Gastrocnemius medialis (tissue), 4 donors: ENCODE measurements at regions of chr6 and their contacts with region 1.

Region 1: DNA sequence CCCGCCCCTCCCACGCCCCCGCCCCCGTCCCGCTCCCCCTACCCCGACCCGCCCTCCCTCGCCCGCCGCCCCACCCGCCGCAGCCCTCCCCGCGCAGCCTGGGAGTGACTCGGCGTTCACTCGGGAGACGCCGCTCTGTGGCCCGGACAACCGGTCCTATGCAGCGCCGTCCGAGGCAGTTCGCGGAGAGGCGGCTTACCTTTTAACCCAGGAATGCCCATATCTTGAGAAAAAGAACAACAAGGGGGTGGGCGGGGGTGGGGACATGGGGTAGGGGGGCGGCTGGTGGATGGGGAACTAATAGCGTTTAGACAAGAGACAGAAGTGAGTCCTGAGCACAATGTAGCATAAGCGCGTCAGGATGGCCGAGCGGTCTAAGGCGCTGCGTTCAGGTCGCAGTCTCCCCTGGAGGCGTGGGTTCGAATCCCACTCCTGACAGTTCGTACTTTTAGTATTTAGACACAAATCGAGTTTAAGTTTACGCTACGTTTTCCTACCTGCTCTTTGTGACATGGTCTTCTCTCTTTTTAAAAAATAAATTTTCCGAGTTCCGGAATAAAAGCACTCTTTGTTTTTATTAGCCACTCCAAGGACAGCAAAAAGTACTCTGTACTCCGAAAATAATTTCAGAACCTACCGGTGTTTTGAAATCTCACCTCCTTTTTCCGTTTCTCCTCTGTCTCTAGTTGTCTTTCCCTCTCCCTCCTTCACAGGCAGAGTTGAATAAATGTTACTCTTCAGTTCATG is 17.1 kb upstream of the HMGN4 start:
- DNase-seq: peak; percentile 75 to 84
- ATAC-seq: peak; percentile 83 to 86
- H3K4me3 ChIP-seq: peak overlapping the region; percentile 66 to 84 (median 76)
- H3K27ac ChIP-seq: peak overlapping the region; percentile 90 to 98 (median 98)
- H3K4me1 ChIP-seq: peaks cover 16 to 29% of the 10 kb centered on the region in 2 donors
- H3K27me3 ChIP-seq: no peaks in the 10 kb centered on the region
- CTCF ChIP-seq: no peak
- POLR2A ChIP-seq: peak in 1 of 2 donors; percentile 3

Region 2: DNA sequence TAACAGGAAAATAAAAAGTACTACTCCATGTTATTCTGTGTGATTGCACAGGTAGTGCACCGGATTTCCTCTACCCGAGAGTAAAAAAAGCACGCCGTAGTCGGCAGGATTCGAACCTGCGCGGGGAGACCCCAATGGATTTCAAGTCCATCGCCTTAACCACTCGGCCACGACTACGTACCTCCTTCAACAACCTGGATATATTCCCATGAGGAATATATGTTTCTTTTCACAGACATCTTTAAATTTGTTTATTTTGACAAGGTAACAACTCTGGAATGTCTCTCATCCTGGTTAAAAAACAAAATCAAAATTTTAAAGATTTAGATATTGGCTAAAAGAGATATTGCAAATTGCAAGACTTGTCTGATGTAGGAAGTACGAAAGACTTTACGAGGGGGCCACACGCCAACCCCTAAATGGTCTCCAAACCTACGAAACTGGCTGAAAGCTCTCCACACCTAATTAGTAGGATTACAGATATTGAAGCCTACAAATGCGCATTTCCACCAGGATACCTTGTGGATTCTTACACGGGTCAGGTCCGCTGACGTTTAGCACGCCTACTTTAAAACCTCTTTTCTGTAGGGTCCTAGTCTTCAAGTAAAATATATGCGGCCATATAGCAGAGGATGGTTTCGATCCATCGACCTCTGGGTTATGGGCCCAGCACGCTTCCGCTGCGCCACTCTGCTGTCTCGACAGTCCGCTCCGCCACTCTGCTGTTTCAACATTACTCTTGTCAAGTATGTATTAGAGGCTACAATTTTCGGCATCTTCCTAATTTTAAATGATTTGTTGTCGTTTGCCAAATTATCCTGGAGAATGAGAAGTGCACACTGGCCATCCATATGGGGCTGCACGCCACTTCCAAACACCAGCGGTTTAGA is 208.3 kb before region 1 on chr6:
- in situ Hi-C with region 1: no loop called
- intact Hi-C with region 1: loop called (anchors 5 kb)
- DNase-seq: peak; percentile 67
- ATAC-seq: peak; percentile 81 to 82
- H3K4me3 ChIP-seq: peak overlapping the region; percentile 54 to 65 (median 54)
- H3K27ac ChIP-seq: peak overlapping the region; percentile 67 to 83 (median 75)
- H3K4me1 ChIP-seq: peaks cover 8 to 10% of the 10 kb centered on the region in 2 donors
- H3K27me3 ChIP-seq: no peaks in the 10 kb centered on the region
- CTCF ChIP-seq: no peak
- POLR2A ChIP-seq: no peak

Region 3: DNA sequence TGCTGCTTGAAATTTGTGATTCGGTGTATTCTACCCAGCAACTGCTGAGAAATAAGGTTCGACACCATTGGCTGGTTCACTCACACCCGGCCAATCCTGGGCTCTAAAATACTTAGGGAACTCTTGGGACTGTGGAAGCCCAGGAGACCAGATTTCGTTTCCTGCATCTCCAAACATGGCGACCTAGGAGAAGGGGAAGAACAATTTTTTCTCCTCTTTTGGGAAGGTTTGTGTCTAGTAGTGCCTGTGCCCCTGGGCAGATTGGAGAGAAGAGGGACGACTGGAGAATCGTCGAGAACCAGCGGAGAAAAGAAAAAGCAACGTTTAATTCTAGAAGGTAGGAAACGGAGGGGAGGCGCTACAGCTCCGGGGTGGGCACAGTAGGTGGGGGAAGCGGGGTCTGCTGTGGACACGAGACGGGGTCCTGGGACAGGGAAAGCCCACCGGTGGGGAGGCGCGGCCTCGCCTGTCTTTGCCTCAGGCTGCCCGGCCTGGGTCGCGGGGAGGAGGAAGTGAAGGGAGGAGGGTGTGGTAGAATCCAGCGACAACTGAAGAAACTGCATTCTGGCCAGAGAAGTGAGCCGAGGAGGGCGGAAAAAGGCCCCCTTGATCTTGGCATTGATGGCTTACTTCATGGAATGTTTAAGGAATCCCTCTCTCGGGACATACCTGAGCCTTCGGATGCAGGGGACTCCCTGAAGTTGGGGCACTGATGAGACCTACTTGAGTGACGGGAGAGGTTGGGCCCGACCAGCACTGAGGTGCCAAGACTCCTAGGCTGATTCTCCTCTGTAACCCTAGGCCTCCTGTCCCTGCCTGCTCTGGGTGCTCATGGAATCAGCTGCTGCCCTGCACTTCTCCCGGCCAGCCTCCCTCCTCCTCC is 63.0 kb before region 1 on chr6 and contains the start of gene BTN2A1:
- in situ Hi-C with region 1: no loop called
- intact Hi-C with region 1: loop called (anchors 2 kb)
- DNase-seq: peak; percentile 82
- ATAC-seq: peak; percentile 99 to 100
- H3K4me3 ChIP-seq: peak within 1 kb of the TSS; percentile 74 to 94 (median 86)
- H3K27ac ChIP-seq: peak within 1 kb of the TSS; percentile 93 to 97 (median 94)
- H3K4me1 ChIP-seq: peaks cover 28 to 37% of the 10 kb centered on the region in 2 donors
- H3K27me3 ChIP-seq: no peaks in the 10 kb centered on the region
- CTCF ChIP-seq: no peak
- POLR2A ChIP-seq: peak in 1 of 2 donors; percentile 34
- total RNA-seq, gene BTN2A1: 6.2 to 9.7 (median 8.1) TPM

Region 4: DNA sequence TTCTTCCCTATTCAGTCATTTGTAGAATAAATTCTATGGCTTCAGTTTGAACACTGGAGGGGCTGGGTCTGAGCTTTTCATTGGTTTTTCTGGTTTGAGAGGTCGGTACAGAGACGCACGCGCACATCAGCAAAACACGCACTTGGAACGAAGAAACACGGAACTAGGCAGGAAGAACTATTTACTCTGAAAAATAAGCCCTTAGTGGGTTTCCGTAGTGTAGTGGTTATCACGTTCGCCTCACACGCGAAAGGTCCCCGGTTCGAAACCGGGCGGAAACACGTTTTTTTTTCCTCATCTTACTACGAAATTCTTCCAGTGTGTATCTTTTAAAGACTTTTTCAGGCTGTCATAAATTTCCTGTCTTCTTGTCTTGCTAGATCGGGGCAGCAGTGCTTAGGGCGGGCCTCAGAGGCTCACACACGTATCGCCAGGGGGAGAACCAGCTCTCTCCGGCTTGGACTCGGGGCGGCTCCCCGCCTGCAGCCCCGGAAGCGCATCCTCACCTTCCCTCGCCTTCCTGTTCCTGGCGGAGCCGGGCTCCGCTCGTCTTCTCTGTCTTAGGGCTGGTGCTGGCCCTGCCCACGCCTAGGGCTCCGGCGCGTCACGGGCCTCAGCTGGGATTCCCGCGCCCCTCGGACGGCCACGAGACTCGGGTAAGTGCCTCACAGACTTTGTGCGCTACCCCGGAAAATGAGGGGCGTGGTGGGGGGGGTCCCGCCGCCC is 17.0 kb after region 1 on chr6 and contains the start of gene HMGN4:
- in situ Hi-C with region 1: no loop called
- intact Hi-C with region 1: loop called (anchors 1 kb)
- DNase-seq: peak; percentile 58 to 72
- ATAC-seq: peak; percentile 68 to 85
- H3K4me3 ChIP-seq: peak within 1 kb of the TSS; percentile 75 to 89 (median 89)
- H3K27ac ChIP-seq: peak within 1 kb of the TSS; percentile 89 to 95 (median 92)
- H3K4me1 ChIP-seq: peaks cover 39 to 41% of the 10 kb centered on the region in 2 donors
- H3K27me3 ChIP-seq: no peaks in the 10 kb centered on the region
- CTCF ChIP-seq: no peak
- POLR2A ChIP-seq: peak; percentile 47 to 62
- total RNA-seq, gene HMGN4: 20.1 to 58.7 (median 28.4) TPM

Region 5: GRCh38 chr6:26568601-26569432 is 47.8 kb after region 1 on chr6:
- in situ Hi-C with region 1: no loop called
- intact Hi-C with region 1: loop called (anchors 2 kb)
- DNase-seq: peak; percentile 74 to 88
- ATAC-seq: peak; percentile 89 to 91
- H3K4me3 ChIP-seq: peak overlapping the region; percentile 37 to 59 (median 50)
- H3K27ac ChIP-seq: peak overlapping the region; percentile 19 to 54 (median 43)
- H3K4me1 ChIP-seq: peaks cover 2 to 7% of the 10 kb centered on the region in 2 donors
- H3K27me3 ChIP-seq: no peaks in the 10 kb centered on the region
- CTCF ChIP-seq: no peak
- POLR2A ChIP-seq: no peak